Activated T-helper 2 cell treated with anti-CD3 and anti-CD28 coated beads, Interferon-gamma antibody, Interleukin-2, Interleukin-4, amounts not matched to agents 10 μg/mL and 5 μg/mL and 100 μg/mL, durations not matched to agents 14 hours and 24 hours and 36 hours (primary cell): ENCODE measurements at regions of chr6 and their contacts with region 1.

Region 1: DNA sequence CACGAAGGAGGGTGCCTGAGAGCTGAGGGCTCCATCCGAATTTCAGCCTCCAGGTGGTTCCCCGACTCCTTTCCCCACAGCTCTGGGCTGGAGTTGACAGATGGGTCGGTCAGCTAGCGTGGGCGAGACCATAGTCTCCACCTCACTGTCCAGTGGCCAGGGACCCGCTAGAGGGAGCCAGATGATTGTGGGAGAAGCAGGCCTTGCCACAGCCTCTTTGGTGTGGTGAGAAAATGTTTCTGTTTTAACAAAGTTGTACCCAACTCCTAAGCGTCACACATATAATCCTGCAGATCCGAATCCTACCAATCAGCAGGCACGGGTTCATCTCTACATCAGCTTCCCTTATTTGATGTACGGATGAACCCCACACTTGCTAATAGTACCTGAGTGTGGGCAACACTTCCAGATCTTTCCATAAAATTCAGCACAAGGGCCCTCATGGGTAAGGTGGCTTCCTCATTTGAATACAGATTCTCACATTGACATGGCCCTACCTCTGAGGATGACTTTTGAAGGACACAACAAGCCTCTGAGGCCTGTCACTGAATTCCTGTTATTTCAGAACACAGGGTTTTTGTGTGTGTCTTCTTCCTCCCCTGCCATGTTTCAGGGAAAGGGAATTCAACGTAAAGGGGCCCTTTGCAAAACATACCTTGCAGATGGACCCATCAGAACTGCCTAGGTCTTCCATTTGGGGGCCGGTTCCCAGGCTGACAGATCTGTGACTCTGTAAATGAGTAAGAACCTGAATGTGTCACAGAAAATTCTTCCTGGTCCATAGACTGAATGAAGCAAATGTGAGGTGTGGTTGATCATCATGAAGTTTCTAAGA is 103.2 kb upstream of the DUSP22 start:
- DNase-seq: peak; percentile 77
- H3K4me3 Mint-ChIP-seq: peak overlapping the region; percentile 20
- H3K27ac Mint-ChIP-seq: peak overlapping the region; percentile 71
- H3K4me1 Mint-ChIP-seq: peaks cover 46% of the 10 kb centered on the region
- H3K27me3 Mint-ChIP-seq: no peaks in the 10 kb centered on the region

Region 2: DNA sequence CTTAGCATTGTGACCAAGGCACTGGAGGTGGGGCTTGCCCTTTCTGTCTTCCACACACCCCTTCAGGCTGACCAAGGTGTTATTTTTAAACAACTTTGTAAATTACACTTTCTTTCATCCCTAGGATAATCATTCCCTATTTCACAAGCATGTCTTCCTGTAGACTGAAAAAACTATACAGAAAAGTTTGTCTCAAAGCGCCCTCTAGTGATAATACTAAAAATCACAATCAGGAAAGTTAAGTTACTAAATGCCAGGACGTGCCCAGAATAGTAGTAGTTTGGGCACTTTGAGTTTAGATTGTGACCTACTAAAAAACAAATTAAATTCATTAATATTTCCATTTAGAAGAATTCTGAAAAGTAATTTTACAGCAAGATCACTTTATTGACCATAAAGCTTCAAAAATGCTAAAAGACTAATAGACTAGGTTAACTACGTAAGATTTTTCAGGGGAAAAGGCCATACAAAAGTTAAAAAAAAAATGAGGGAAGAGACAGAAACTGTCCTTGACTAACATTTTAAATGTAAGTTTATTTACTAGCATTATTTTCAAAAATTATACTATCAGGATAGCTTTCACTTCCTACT is 20.1 kb before region 1 on chr6:
- intact Hi-C with region 1: no loop called
- DNase-seq: no peak
- H3K4me3 Mint-ChIP-seq: no peak overlapping the region
- H3K27ac Mint-ChIP-seq: no peak overlapping the region
- H3K4me1 Mint-ChIP-seq: peaks cover 3% of the 10 kb centered on the region
- H3K27me3 Mint-ChIP-seq: peaks cover 21% of the 10 kb centered on the region

Region 3: DNA sequence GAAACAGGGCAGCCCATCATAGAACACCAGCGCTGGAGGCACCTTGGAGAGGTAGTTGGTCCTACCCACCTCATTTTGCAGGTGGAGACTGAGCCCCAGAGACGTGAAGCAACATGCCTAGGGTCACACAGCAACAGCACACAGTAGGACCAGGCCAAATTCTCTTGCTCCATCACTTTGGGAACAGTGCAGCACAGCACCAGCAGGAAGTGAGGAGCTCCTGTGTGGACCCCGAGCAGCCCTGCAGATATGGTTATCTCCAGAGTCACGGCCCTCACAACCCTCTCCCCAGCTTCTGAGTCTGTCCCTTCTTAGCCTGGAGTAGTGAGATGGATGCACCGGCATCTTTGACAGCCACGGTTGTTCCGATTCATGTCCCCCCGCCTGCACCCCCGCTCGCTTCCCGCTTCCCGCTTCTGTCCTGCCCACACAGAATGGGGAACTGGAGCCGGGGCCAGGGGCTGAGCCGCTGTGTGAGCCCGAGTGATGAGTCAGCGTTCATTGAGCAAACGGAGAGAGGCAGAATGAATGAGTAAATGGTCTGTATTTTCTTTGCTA is 30.7 kb after region 1 on chr6:
- intact Hi-C with region 1: loop called (anchors 1 kb)
- DNase-seq: no peak
- H3K4me3 Mint-ChIP-seq: no peak overlapping the region
- H3K27ac Mint-ChIP-seq: no peak overlapping the region
- H3K4me1 Mint-ChIP-seq: peaks cover 69% of the 10 kb centered on the region
- H3K27me3 Mint-ChIP-seq: no peaks in the 10 kb centered on the region

Region 4: GRCh38 chr6:235763-236360 is 46.8 kb after region 1 on chr6:
- intact Hi-C with region 1: loop called (anchors 1 kb)
- DNase-seq: peak; percentile 37
- H3K4me3 Mint-ChIP-seq: peak overlapping the region; percentile 60
- H3K27ac Mint-ChIP-seq: peak overlapping the region; percentile 82
- H3K4me1 Mint-ChIP-seq: peaks cover 43% of the 10 kb centered on the region
- H3K27me3 Mint-ChIP-seq: no peaks in the 10 kb centered on the region

Region 5: GRCh38 chr6:336159-337019 is 147.4 kb after region 1 on chr6:
- intact Hi-C with region 1: loop called (anchors 1 kb)
- DNase-seq: peak; percentile 23
- H3K4me3 Mint-ChIP-seq: peak overlapping the region; percentile 35
- H3K27ac Mint-ChIP-seq: peak overlapping the region; percentile 74
- H3K4me1 Mint-ChIP-seq: peaks cover 55% of the 10 kb centered on the region
- H3K27me3 Mint-ChIP-seq: no peaks in the 10 kb centered on the region

Region 6: DNA sequence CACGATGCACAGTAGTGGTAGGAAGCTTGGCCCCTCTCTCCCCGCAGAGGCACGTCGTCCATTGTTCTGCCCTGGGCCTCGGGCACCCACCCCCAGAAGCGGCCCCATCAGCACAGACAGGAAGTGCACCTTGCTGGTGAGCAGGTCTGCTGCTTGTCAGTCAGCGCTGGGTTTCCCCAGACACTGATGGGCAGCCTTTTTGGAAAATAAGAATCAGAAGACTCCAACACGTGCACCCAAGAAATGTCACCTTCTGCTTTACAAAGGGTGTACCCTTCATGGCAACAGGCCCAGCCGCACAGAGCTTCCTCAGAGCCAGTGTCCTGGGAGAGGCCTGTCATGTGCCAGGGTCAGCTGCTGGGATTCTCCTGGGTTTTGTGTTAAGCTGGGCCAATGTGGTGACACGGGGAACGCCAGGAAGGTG is 167.8 kb after region 1 on chr6:
- intact Hi-C with region 1: no loop called
- DNase-seq: no peak
- H3K4me3 Mint-ChIP-seq: no peak overlapping the region
- H3K27ac Mint-ChIP-seq: no peak overlapping the region
- H3K4me1 Mint-ChIP-seq: peaks cover 10% of the 10 kb centered on the region
- H3K27me3 Mint-ChIP-seq: no peaks in the 10 kb centered on the region

Region 7: DNA sequence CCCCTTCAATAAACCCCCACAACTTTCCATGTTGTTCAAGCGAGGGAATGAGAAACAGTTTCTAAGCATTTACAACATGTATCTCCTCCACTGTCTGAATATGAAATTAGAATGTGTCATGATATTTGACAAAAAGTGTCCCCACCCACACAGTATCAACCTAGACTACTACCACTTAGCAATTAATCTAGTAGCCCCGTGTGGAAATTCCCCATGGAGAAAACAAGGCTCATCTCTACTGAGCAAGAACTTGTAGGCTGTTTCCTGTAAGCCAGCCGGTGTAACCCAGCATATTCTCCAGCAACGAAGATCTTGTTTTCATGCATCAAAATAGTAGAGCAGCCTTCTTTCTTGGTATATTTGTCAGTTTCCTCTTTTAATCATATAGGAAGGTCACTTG is 317.5 kb after region 1 on chr6:
- intact Hi-C with region 1: loop called (anchors 2 kb)
- DNase-seq: no peak
- H3K4me3 Mint-ChIP-seq: peak overlapping the region; percentile 38
- H3K27ac Mint-ChIP-seq: peak overlapping the region; percentile 95
- H3K4me1 Mint-ChIP-seq: peaks cover 94% of the 10 kb centered on the region
- H3K27me3 Mint-ChIP-seq: no peaks in the 10 kb centered on the region